ENCODE measurements at regions of chr2 and their contacts with region 1.

Region 1: DNA sequence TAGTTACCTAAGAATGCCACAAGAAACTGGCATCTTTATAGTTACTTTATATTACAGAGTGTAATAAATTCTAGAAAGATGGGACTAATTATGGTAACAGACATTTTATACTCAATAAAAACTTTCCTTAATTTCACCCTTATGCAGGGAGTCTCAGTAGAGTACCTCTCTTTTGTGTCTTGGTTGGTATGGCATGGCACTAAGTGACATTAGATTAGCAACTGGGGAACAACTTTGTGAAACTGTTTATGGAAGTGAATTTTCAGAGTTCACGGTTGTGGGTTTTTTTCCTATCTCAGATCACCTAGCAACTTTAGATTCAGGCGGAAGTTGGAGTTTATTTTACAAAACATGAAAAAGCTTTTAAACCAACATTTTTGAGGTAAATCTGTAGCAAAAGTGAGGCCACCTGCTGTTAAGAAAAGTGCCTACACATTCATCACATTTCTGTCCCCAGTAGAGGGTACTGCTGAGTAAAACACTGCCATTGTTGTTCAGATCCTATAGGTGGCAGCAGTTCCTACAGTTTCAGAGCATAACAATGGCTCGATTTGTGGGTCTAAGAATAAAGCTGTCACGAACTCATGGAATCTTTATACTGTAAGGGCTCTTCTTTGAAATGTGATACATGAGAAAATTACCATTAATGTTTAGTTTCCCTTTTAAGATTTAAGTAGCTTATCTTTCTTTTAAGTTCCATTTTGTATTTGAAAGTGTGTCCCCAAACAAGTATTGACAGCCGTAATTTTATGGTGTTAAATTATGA is 117.6 kb downstream of the CAMKMT start:
- DNase-seq: peak; percentile 56
- H3K4me3 Mint-ChIP-seq: no peak overlapping the region
- H3K27ac Mint-ChIP-seq: no peak overlapping the region
- H3K4me1 Mint-ChIP-seq: peaks cover 7% of the 10 kb centered on the region
- H3K27me3 Mint-ChIP-seq: no peaks in the 10 kb centered on the region

Region 2: GRCh38 chr2:44044281-44044720 is 435.0 kb before region 1 on chr2:
- CTCF ChIA-PET with region 1: interaction called, 8 read pairs
- intact Hi-C with region 1: loop called (anchors 1 kb)
- DNase-seq: peak; percentile 93
- H3K4me3 Mint-ChIP-seq: no peak overlapping the region
- H3K27ac Mint-ChIP-seq: no peak overlapping the region
- H3K4me1 Mint-ChIP-seq: no peaks in the 10 kb centered on the region
- H3K27me3 Mint-ChIP-seq: no peaks in the 10 kb centered on the region

Region 3: DNA sequence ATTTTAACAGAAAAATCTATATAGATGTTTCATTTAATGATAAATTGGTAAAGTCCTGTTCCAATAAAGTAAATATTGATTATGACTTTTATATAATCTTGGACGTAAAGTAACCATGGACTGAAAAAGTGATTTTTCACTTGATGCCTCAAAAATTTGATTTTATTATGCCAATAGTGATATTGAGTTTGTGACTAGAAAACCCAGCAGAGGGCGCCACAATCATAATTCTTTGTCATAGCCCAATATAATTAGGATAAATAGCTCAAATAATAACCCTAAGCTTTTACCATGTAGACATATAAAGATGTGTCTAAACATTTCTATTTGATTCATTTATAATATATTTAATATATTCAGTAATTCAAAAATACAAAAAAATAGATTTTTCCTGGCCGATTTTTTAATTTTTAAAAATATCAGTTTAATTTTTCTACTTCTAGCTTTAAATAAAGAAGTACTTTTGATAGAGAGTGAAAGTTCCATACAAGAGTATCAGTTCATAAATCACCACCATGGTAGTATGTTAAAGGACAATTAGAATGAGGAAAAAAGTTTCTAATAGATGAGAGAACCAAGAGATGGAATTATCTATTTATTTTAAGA is 86.9 kb before region 1 on chr2:
- CTCF ChIA-PET with region 1: interaction called, 15 read pairs
- intact Hi-C with region 1: loop called (anchors 1 kb)
- DNase-seq: peak; percentile 72
- H3K4me3 Mint-ChIP-seq: no peak overlapping the region
- H3K27ac Mint-ChIP-seq: no peak overlapping the region
- H3K4me1 Mint-ChIP-seq: peaks cover 5% of the 10 kb centered on the region
- H3K27me3 Mint-ChIP-seq: no peaks in the 10 kb centered on the region

Region 4: GRCh38 chr2:44560352-44560751 is 81.0 kb after region 1 on chr2:
- CTCF ChIA-PET with region 1: interaction called, 10 read pairs
- intact Hi-C with region 1: no loop called
- DNase-seq: peak; percentile 51
- H3K4me3 Mint-ChIP-seq: no peak overlapping the region
- H3K27ac Mint-ChIP-seq: no peak overlapping the region
- H3K4me1 Mint-ChIP-seq: no peaks in the 10 kb centered on the region
- H3K27me3 Mint-ChIP-seq: no peaks in the 10 kb centered on the region

Region 5: DNA sequence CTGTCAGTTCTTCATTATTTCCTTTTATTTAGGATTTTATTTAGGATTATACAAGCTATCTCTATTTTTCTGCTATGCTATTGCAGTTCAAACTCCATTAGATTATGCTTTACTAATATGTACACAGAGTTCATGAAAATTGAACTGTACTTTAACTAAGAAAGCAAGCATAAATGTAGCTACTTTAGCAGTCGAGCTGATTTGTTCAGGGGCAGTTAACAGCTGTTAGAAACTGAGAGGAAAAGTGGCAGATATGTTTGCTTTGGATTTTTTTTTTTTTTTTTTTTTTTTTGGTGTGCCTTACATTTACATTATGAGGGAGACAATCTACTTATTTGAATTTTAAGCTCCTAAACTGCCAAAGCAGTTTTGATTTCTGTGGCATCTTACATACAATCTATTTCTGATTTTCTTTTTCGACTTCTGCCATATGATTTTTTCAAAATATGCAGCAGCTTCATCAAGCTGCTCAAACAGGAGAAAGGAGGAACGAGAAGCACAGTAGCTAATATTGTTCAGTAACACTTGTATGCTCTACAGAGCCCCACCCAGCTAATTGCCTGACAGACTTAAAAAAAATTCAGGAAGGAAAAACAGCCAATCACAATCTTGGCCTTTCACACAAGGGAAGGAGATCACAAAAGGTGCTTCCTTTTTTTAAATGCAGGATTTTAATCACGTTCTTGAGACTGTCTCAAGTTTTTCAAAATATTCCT is 228.8 kb after region 1 on chr2:
- CTCF ChIA-PET with region 1: interaction called, 10 read pairs
- intact Hi-C with region 1: no loop called
- DNase-seq: no peak
- H3K4me3 Mint-ChIP-seq: no peak overlapping the region
- H3K27ac Mint-ChIP-seq: no peak overlapping the region
- H3K4me1 Mint-ChIP-seq: peaks cover 7% of the 10 kb centered on the region
- H3K27me3 Mint-ChIP-seq: no peaks in the 10 kb centered on the region

Region 6: DNA sequence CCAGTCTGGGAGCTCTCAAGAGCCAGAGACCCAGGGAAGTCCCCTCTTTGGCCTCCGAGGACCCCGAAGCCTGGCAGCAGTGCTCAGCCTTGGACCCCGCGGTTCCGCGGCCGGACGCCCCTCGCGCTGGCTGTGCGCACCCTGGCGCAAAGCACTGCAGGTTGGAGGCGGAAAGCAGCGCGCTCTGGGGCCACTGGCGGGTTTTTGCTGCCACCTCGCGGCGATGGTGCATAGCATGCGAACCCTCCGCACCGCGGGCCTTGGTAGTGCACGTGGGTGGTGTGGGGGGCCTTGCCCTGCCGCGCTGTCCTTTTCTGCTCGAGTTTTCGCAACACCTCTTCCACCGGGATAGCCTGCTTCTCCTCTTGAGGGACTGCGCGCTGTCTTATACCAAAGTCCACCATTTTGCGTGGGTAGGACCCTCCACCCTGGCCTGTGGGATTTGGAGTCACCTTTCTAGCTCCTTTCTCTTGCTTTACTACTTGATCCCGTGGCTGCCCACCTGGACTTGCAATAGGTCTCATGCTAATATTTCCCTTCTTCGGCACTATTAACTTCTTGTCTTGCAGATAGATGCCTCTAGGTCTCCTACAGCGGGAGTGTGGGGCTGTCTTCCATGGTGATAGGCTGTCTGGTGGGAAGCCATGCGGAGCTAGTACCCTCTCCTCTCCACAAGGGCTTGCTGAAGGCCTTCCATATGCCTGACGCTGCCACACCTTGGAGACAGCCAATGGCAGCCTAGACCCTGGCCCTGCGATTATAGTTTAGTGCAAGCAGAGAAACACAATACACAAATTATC is 476.5 kb after region 1 on chr2:
- CTCF ChIA-PET with region 1: interaction called, 42 read pairs
- intact Hi-C with region 1: loop called (anchors 1 kb)
- DNase-seq: peak; percentile 87
- H3K4me3 Mint-ChIP-seq: no peak overlapping the region
- H3K27ac Mint-ChIP-seq: no peak overlapping the region
- H3K4me1 Mint-ChIP-seq: peaks cover 18% of the 10 kb centered on the region
- H3K27me3 Mint-ChIP-seq: peaks cover 54% of the 10 kb centered on the region

Region 7: DNA sequence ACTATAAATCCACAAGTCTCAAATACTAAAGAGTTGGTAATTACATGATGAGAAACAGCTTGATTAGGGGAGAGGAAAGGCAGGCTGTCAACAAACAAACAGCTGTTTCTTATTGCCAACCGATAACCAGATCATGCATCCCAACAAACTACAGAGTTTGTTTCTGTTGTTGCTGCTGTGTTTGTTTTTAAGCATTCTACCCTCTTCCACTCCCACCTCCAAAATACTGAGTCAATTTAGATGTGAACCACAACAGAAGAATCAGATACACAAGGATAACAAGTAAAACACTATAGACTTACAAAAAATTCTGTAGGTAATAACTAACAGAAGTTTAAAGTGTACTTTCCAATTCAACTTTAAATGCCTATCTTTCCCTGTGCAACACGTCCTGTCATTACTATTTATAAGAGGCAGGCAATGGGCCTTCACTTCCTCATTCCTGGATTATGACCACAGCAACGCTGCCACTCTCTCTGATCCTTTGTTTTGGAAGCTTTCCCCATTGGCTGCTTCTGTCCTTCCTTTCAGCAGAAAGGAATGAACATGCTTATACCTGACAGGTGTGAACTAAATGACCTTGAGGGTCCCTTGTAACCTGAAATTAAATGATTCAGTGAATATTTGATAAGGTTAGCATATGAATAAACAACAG is 979.7 kb after region 1 on chr2:
- CTCF ChIA-PET with region 1: no interaction called
- intact Hi-C with region 1: no loop called
- DNase-seq: no peak
- H3K4me3 Mint-ChIP-seq: no peak overlapping the region
- H3K27ac Mint-ChIP-seq: no peak overlapping the region
- H3K4me1 Mint-ChIP-seq: no peaks in the 10 kb centered on the region
- H3K27me3 Mint-ChIP-seq: no peaks in the 10 kb centered on the region